PC-3 (cell line): ENCODE measurements at regions of chr2 and their contacts with region 1.

Region 1: DNA sequence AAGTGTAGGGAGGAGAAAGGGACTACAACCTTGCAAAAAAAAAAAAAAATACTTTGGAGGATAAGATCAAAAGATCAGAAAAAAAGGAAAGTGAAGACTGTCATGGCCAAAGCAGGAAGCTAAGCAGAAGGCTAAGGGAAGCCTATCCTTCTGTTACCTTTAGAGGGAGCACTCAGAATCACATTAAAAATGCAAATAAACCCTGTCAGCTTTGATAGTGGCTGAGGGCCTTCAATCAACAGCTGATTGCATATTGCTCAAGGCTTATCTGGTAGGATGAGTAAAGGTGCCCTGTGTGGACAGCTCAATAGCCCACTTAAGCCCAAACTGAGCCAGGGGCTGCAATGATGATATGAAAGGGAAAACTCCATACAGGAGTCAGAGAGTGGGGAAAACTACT is 1021.2 kb downstream of the LRP1B start:
- DNase-seq: peak; percentile 31
- ATAC-seq: no peak
- H3K4me3 ChIP-seq: no peak overlapping the region
- H3K27ac ChIP-seq: no peak overlapping the region
- H3K4me1 ChIP-seq: no peaks in the 10 kb centered on the region
- H3K27me3 ChIP-seq: no peaks in the 10 kb centered on the region
- CTCF ChIP-seq: peak; percentile 49

Region 2: DNA sequence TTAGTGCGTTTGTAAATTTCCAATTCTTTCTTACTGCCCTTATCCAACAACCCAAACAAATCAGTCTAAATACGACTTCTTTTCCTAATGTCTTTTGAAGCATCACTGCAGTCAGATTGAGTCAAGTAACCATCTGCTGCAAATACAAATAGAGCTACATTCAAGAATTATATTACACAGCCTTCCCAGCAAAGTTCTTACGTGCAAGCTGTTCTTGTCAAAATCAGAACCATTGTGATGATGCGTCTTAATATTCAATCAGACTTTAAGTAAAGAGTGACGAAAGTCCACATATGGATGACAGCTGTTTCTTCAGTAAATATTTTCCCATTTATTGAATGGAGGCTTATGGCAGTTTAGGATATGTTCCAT is 77.4 kb after region 1 on chr2:
- CTCF ChIA-PET with region 1: no interaction called
- POLR2A ChIA-PET with region 1: interaction called, 10 read pairs
- intact Hi-C with region 1: no loop called
- DNase-seq: no peak
- ATAC-seq: no peak
- H3K4me3 ChIP-seq: no peak overlapping the region
- H3K27ac ChIP-seq: no peak overlapping the region
- H3K4me1 ChIP-seq: no peaks in the 10 kb centered on the region
- H3K27me3 ChIP-seq: no peaks in the 10 kb centered on the region
- CTCF ChIP-seq: no peak